Colonic mucosa (tissue), 4 donors: ENCODE measurements at regions of chr3 and their contacts with region 1.

Region 1: DNA sequence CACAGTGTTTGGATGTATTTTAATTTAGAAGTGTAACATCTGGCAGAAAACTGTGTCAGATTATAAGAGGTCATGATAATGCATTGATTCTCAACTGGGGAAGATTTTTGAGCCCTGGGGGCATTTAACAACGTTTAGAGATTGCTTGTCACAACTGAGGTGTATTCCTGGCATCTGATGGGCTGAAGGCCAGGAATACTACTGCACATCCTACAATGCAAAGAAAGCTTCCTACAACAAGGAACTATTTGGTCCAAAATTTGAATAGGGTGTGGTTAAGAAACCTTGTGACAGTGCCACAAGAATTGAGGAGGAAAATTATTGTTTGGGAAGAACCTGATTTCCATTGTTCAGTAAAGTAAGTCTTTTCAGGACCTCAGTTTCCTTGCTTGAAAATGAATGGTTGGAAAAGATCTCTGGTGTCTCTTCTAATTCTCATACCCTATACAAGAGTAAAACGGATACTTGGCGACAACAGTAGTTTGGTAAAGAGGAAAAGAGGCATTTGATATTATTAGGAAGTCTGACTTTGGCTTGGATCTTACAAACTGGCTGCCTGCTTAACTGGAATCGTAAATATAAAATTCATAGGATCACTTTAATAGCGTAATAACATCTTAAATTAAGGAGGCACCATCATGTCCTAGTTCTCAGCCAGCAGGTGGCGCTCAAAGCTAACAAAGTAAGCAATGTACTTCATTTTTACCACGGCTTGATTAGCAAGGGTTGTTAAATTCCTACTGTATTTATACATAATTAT is 4.3 kb downstream of the DAZL start:
- DNase-seq: peak; percentile 73
- H3K4me3 ChIP-seq: no peak overlapping the region
- H3K27ac ChIP-seq: no peak overlapping the region
- H3K4me1 ChIP-seq: no peaks in the 10 kb centered on the region
- H3K27me3 ChIP-seq: no peaks in the 10 kb centered on the region
- CTCF ChIP-seq: peak; percentile 79

Region 2: DNA sequence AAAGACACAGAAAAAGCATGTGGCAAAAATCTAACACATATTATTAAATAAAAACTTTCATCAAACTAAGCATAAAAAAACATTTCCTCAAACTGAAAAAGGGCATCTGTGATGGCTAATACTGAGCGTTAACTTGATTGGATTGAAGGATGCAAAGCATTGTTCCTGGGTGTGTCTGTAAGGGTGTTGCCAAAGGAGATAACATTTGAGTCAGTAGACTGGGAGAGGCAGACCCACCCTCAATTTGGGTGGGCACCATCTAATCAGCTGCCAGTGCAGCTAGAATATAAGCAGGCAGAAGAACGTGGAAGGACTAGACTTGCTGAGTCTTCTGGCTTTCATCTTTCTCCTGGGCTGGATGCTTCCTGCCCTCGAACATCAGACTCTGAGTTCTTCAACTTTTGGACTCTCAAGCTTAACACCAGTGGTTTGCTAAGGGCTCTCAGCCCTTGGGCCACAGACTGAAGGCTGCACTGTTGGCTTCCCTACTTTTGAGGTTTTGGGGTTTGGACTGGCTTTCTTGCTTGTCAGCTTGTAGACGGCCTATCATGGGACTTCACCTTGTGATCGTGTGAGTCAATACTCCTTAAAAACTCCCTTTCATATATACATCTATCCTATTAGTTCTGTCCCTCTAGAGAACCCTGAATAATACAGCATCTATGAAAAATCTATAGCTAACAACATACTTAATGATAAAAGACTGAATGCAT is 41.2 kb before region 1 on chr3:
- intact Hi-C with region 1: no loop called
- DNase-seq: no peak
- H3K4me3 ChIP-seq: no peak overlapping the region
- H3K27ac ChIP-seq: no peak overlapping the region
- H3K4me1 ChIP-seq: no peaks in the 10 kb centered on the region
- H3K27me3 ChIP-seq: no peaks in the 10 kb centered on the region
- CTCF ChIP-seq: no peak

Region 3: DNA sequence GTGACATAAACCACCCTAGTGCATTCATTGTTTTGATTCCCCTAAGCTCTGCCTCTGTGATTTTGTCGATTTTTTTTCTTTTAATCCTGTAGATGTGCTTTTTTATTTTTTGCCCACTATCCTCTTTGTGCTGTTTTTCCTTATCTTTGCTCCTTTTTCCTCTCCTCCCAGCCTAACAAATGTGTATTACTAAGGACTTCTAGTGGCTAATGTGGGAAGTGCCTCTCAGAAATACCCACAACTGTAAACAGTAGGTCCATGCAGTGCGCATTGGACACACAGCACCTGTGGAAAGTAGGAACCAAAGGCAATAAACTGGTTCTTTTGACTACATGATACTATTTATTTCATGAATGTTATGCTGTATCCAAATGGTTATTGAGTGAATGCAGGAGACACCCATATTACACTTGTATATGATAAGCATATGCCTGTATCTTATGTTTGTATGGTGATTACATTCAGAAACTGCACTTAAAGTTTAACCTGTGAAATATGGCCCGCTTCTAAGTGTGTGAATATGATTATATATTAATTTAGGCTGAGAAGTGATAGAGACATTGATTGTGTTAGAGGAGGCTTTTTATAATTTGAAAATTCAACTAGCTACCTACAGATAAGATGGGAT is 431.6 kb after region 1 on chr3:
- intact Hi-C with region 1: loop called (anchors 10 kb)
- DNase-seq: peak; percentile 23
- H3K4me3 ChIP-seq: no peak overlapping the region
- H3K27ac ChIP-seq: no peak overlapping the region
- H3K4me1 ChIP-seq: no peaks in the 10 kb centered on the region
- H3K27me3 ChIP-seq: no peaks in the 10 kb centered on the region
- CTCF ChIP-seq: peak; percentile 65

Region 4: GRCh38 chr3:17233398-17233800 is 632.4 kb after region 1 on chr3:
- intact Hi-C with region 1: loop called (anchors 5 kb)
- DNase-seq: no peak
- H3K4me3 ChIP-seq: no peak overlapping the region
- H3K27ac ChIP-seq: no peak overlapping the region
- H3K4me1 ChIP-seq: no peaks in the 10 kb centered on the region
- H3K27me3 ChIP-seq: no peaks in the 10 kb centered on the region
- CTCF ChIP-seq: peak; percentile 52

Region 5: DNA sequence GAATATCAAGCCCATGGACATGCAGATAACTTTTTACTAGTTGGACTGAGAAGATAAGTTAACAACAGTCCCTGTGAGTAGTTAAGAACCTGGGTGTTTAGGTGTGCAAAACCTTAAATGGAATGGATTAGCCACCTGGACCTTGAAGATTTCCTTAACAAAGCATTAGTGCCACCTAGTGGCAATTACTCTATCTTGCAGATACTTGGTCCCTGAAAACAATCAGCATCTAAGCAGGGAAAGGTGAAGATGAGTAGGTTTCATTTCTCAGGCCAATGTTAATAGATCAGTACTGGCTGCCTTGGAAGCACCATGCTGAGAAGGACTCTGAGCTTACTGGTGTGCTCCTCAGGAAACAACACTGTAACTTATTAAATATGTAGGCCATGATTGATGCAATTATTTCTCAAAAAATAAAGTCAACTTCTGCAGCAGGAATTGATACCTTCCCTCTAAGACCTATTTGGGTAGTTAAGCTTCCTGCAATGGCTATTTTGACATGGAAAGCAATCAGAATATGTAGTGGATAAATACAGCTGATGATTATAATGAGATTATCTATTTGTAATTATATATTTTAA is 812.1 kb after region 1 on chr3:
- intact Hi-C with region 1: loop called (anchors 10 kb)
- DNase-seq: peak; percentile 22
- H3K4me3 ChIP-seq: no peak overlapping the region
- H3K27ac ChIP-seq: no peak overlapping the region
- H3K4me1 ChIP-seq: no peaks in the 10 kb centered on the region
- H3K27me3 ChIP-seq: no peaks in the 10 kb centered on the region
- CTCF ChIP-seq: peak; percentile 64